CD14-positive monocyte (primary cell): ENCODE measurements at regions of chr3 and their contacts with region 1.

Region 1: DNA sequence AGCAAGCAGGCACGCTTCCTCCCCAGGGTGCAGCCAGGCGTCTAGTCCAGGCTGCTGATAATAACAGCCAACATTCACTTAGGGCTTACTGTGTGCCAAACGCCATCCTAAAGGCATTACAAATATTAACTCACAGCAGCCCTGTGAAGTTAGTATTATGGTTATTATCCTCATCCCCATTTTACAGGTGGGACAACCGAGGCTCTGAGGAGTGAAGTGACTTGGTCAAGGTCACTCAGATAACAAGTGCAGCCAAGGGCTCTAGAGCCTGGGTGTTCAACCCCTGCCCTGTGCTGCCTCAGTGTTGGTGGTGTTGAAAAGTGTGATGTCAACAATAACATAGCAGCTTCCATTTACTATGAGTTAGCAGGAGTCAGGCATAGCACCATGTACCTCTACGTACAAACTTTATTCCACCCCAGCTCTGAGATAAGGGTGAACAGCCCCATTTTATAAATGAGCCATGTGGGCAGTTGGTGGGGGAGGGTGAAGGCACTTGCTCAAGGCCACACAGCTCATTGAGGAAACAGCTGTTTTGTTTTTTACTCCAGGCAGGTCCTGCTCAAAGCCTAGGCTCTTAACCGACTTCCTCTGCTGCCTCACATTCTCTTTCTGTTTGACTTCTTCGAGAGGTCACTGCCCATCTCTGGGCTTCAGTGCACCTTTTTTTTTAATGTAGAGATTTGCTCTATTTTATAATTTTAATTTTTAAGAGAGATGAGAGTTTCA is 24.0 kb upstream of the TRH start:
- DNase-seq: no peak
- H3K4me3 ChIP-seq: no peak overlapping the region
- H3K4me3 Mint-ChIP-seq: no peak overlapping the region
- H3K27ac ChIP-seq: no peak overlapping the region
- H3K27ac Mint-ChIP-seq: peak overlapping the region in 1 of 7 donors; percentile 3
- H3K4me1 ChIP-seq: peaks cover 46 to 52% of the 10 kb centered on the region in 2 donors
- H3K4me1 Mint-ChIP-seq: peaks cover 49% of the 10 kb centered on the region
- H3K27me3 ChIP-seq: no peaks in the 10 kb centered on the region
- H3K27me3 Mint-ChIP-seq: peaks cover 0 to 3% (median 2%) of the 10 kb centered on the region in 3 donors
- CTCF ChIP-seq: no peak

Region 2: DNA sequence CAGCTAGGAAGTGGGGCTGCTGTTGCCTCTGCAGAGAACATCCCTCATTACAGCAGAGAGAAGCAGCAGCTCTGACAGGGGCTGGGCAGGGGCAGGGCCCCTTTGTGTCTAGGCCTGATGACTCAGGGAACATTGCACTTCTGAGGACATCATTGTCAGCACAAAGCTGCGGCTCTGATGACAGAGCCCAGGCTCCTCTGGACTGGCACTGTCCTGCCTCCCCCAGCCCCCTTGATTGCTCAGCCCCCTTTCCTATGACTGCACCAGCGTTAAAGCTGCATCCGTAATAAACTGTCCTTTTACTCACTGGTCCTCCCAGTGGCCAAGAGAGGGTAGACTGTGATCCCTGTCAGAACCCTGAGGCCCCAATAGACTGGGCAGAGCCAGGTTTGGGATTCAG is 42.3 kb after region 1 on chr3:
- intact Hi-C with region 1: loop called in 1 of 2 experiments (anchors 5 kb)
- DNase-seq: no peak
- H3K4me3 ChIP-seq: no peak overlapping the region
- H3K4me3 Mint-ChIP-seq: no peak overlapping the region
- H3K27ac ChIP-seq: no peak overlapping the region
- H3K27ac Mint-ChIP-seq: no peak overlapping the region
- H3K4me1 ChIP-seq: no peaks in the 10 kb centered on the region
- H3K4me1 Mint-ChIP-seq: no peaks in the 10 kb centered on the region
- H3K27me3 ChIP-seq: no peaks in the 10 kb centered on the region
- H3K27me3 Mint-ChIP-seq: peaks cover 0 to 7% (median 0%) of the 10 kb centered on the region in 3 donors
- CTCF ChIP-seq: no peak

Region 3: DNA sequence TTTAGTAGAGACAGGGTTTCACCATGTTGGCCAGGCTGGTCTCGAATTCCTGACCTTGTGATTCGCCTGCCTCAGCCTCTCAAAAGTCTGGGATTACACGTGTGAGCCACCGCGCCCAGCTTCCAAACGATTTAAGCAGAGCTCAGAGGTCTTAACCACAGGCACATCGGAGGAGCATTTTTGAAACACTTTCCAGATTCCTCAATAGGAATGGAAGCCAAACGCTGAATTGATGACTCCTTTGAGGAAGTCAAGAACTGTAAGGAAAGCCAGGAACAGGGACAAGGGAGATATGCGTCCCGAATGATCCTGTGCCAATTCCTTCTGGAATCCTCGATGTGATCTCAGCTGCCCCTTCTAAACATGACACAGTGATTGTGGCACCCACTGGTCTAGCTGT is 64.0 kb after region 1 on chr3:
- intact Hi-C with region 1: no loop called
- DNase-seq: no peak
- H3K4me3 ChIP-seq: no peak overlapping the region
- H3K4me3 Mint-ChIP-seq: no peak overlapping the region
- H3K27ac ChIP-seq: no peak overlapping the region
- H3K27ac Mint-ChIP-seq: no peak overlapping the region
- H3K4me1 ChIP-seq: no peaks in the 10 kb centered on the region
- H3K4me1 Mint-ChIP-seq: no peaks in the 10 kb centered on the region
- H3K27me3 ChIP-seq: no peaks in the 10 kb centered on the region
- H3K27me3 Mint-ChIP-seq: peaks cover 0 to 3% (median 2%) of the 10 kb centered on the region in 3 donors
- CTCF ChIP-seq: no peak

Region 4: GRCh38 chr3:130044370-130044769 is 93.9 kb after region 1 on chr3:
- intact Hi-C with region 1: no loop called
- DNase-seq: no peak
- H3K4me3 ChIP-seq: no peak overlapping the region
- H3K4me3 Mint-ChIP-seq: no peak overlapping the region
- H3K27ac ChIP-seq: no peak overlapping the region
- H3K27ac Mint-ChIP-seq: no peak overlapping the region
- H3K4me1 ChIP-seq: no peaks in the 10 kb centered on the region
- H3K4me1 Mint-ChIP-seq: peaks cover 3% of the 10 kb centered on the region
- H3K27me3 ChIP-seq: no peaks in the 10 kb centered on the region
- H3K27me3 Mint-ChIP-seq: peaks cover 2 to 4% (median 4%) of the 10 kb centered on the region in 3 donors
- CTCF ChIP-seq: no peak

Region 5: DNA sequence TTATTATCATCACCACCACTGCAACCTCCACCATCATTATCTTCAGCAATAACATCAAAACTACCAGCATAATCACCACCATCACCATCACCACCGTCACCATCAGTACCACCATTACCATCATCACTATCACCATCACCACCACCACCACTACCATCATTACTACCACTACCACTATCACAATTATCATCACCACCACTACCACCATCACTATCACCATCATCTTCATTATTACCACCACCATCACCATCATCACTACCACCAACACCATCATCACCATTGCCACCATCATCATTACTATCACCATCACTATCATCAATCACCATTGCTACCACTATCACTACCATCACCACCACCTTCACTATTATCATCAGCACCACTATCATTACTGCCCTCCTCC is 285.9 kb after region 1 on chr3:
- intact Hi-C with region 1: no loop called
- DNase-seq: no peak
- H3K4me3 ChIP-seq: no peak overlapping the region
- H3K4me3 Mint-ChIP-seq: no peak overlapping the region
- H3K27ac ChIP-seq: no peak overlapping the region
- H3K27ac Mint-ChIP-seq: no peak overlapping the region
- H3K4me1 ChIP-seq: no peaks in the 10 kb centered on the region
- H3K4me1 Mint-ChIP-seq: no peaks in the 10 kb centered on the region
- H3K27me3 ChIP-seq: no peaks in the 10 kb centered on the region
- H3K27me3 Mint-ChIP-seq: peaks cover 0 to 3% (median 0%) of the 10 kb centered on the region in 3 donors
- CTCF ChIP-seq: no peak